ENCODE measurements at regions of chr7 and their contacts with region 1.

Region 1: DNA sequence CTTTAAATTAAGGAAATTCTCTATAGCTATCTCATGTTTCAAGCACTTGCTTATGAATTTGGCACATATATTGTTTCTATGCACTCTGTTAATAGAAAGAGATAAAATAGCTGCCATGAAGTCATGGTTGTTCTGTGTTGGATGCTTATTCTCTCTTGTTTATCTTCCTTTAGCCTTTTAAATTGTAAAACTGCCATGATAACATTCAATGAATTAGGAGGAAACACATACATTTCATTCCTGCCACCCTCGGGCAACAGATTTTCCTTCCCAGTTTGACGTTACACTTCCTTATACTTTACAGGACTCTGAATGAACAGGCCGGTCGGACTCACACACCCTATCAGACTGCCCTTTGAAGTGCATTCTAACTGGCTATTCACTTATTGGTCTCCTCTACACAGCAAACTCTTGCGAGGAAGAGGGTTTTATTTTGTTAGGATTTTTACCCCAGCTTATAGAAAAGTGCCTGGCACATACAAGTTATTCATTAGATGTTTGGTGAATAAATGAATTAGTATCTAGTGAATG is 65.7 kb upstream of the FERD3L start:
- DNase-seq: no peak
- ATAC-seq: no peak

Region 2: DNA sequence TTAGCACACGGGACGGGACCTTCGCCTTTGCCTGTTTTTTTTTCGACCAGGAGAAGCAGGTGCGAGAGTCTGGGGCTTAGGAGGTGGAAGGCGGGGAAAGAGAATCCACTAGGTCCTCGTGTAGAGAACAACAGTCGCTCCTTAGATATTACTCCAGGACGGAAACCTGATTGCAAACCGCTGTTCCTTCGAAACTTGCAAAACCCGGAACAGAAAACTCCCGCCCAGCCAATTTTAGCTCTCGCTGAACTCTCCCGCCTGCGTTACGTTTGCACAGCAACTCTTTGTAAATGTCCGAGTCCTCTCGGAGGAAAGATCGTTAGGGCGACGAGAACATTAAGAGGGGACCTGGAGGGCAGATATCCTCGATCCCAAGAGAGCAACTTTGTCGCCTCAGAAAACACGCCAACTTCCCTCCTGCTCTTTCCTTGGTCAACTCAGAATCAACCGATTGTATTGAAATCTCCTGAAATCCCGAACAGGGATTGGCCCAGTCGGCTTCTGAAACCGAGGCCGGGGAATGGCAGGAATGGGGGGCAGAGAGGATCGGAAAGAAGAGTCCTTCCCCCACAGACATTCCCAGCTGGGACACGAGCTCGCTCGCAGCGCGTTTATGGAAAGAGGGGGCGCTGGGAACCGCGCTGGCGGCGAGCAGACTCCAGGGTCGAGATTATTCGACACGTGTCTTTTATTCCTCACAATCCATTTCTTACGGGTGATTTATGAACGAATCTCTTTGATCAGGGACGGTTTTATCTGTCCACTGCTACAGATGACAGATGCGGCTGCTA is 103.4 kb before region 1 on chr7:
- intact Hi-C with region 1: no loop called
- DNase-seq: peak; percentile 63
- ATAC-seq: peak; percentile 79

Region 3: DNA sequence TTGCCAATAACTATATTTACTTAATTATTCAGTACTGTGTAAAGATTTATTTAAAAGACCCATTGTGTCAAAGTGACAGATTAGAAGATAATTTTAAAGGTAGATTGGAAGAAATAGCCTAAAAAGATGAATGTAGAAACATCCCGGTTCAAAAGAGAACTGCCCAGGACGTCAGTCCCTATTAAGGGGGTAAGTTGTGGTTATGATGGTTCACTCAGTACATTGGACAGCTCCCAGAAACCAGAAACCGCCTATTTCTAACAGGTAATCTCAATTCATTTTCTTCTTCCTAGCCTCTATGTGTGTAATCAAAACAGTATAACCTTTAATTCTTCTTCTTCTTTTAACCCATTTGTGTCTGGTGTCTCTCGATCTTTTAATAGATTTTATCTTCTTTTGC is 64.2 kb before region 1 on chr7:
- intact Hi-C with region 1: loop called (anchors 2 kb)
- DNase-seq: no peak
- ATAC-seq: no peak

Measured in sciatic nerve (tissue), 2 donors.